H1 (cell line): ENCODE measurements at regions of chr12 and their contacts with region 1.

Region 1: DNA sequence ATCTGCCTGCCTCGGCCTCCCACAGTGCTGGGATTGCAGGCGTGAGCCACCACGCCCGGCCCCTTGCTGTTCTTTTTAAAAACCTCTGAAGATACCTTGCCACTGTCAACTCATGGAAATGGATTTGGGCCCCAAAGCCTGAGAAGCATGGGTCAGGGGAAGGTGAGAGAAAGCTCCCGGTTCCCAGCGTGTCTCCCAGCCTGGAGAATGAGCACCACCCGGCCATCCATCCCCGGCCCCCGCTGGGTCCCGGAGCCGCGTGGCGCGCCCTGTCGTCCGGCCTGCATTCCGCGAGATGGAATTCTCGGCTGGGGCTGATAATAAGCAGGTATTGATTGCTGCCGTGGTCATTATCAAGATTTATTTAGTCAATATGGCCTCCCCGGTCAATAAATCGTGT is 126.5 kb upstream of the MYL2 start:
- DNase-seq: no peak
- H3K4me3 ChIP-seq: no peak overlapping the region
- H3K27ac ChIP-seq: no peak overlapping the region
- H3K4me1 ChIP-seq: peaks cover 0 to 3% (median 0%) of the 10 kb centered on the region in 4 experiments; a peak in 2 of 7 replicates
- H3K27me3 ChIP-seq: no peaks in the 10 kb centered on the region
- CTCF ChIP-seq: no peak
- EP300 ChIP-seq: no peak
- POLR2A ChIP-seq: no peak
- RAD21 ChIP-seq: no peak; a peak in 1 of 4 replicates

Region 2: GRCh38 chr12:111033281-111034082 is 13.4 kb before region 1 on chr12:
- CTCF ChIA-PET with region 1: interaction called, 6 read pairs
- POLR2A ChIA-PET with region 1: interaction called, 15 read pairs
- DNase-seq: peak in 1 of 2 experiments; percentile 84
- H3K4me3 ChIP-seq: peak overlapping the region; percentile 62 to 95 (median 76)
- H3K27ac ChIP-seq: no peak overlapping the region
- H3K4me1 ChIP-seq: peaks cover 7 to 23% (median 15%) of the 10 kb centered on the region in 4 experiments
- H3K27me3 ChIP-seq: peaks cover 0 to 26% (median 16%) of the 10 kb centered on the region in 4 experiments; a peak in 5 of 7 replicates
- CTCF ChIP-seq: peak; percentile 59 to 84 (median 69)
- EP300 ChIP-seq: no peak
- POLR2A ChIP-seq: no peak
- RAD21 ChIP-seq: peak; percentile 44 to 55